PC-3 (cell line): ENCODE measurements at regions of chr2 and their contacts with region 1.

Region 1: GRCh38 chr2:121974897-121975661 is 219.6 kb downstream of the TSN start:
- DNase-seq: peak; percentile 91
- ATAC-seq: peak; percentile 98
- H3K4me3 ChIP-seq: peak overlapping the region; percentile 48; the same call in 1 of the 2 replicates
- H3K27ac ChIP-seq: no peak overlapping the region
- H3K4me1 ChIP-seq: no peaks in the 10 kb centered on the region; the same call in 1 of the 2 replicates
- H3K27me3 ChIP-seq: peaks cover 17% of the 10 kb centered on the region; the same call in 1 of the 2 replicates
- CTCF ChIP-seq: peak; percentile 79

Region 2: GRCh38 chr2:121810959-121811853 is 163.9 kb before region 1 on chr2:
- CTCF ChIA-PET with region 1: interaction called, 3 read pairs
- POLR2A ChIA-PET with region 1: no interaction called
- intact Hi-C with region 1: loop called (anchors 5 kb)
- DNase-seq: peak; percentile 79
- ATAC-seq: peak; percentile 97
- H3K4me3 ChIP-seq: no peak overlapping the region
- H3K27ac ChIP-seq: no peak overlapping the region
- H3K4me1 ChIP-seq: no peaks in the 10 kb centered on the region
- H3K27me3 ChIP-seq: 0 out of 2 replicates have a peak, but pooled peaks cover 4% of the 10 kb centered on the region
- CTCF ChIP-seq: peak; percentile 78

Region 3: DNA sequence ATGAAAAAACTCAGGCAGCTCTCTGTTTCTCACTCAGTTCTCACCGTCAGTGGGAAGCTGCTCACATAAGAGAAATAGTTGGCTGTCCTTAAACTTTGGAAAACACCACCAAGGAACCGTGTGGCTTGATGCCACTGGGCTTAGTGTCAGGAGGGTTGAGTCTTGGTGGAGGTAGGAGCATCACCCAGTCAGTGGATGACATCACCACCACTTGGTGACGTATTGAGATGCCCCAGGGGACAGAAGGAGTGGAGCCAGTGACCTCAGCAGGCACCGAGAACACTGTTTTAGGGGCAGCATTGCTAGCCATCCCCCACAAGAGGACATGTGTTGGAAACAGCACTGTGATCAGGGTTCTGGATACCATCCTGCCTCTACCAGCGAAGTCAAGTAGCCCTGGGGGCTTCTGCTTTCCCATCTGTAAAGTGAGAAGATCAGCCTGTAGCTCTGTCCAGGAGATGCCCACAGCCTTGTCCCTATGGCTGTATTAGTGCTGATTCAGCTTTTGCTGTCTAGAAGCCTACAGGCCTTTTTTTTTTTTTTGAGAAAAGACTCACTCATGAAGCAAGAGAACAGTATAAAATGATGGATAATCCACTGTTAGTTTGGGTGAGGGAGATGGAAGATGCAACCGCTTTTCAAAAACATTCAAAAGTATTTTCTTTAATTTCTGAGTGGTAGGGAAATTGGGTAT is 153.5 kb before region 1 on chr2:
- CTCF ChIA-PET with region 1: no interaction called
- POLR2A ChIA-PET with region 1: no interaction called
- intact Hi-C with region 1: no loop called
- DNase-seq: no peak
- ATAC-seq: no peak
- H3K4me3 ChIP-seq: no peak overlapping the region
- H3K27ac ChIP-seq: no peak overlapping the region
- H3K4me1 ChIP-seq: no peaks in the 10 kb centered on the region
- H3K27me3 ChIP-seq: peaks cover 38% of the 10 kb centered on the region
- CTCF ChIP-seq: no peak

Region 4: GRCh38 chr2:122156176-122156890 is 181.3 kb after region 1 on chr2:
- CTCF ChIA-PET with region 1: no interaction called
- POLR2A ChIA-PET with region 1: no interaction called
- intact Hi-C with region 1: no loop called
- DNase-seq: no peak
- ATAC-seq: no peak
- H3K4me3 ChIP-seq: no peak overlapping the region
- H3K27ac ChIP-seq: no peak overlapping the region
- H3K4me1 ChIP-seq: no peaks in the 10 kb centered on the region
- H3K27me3 ChIP-seq: peaks cover 76% of the 10 kb centered on the region
- CTCF ChIP-seq: no peak

Region 5: GRCh38 chr2:122191341-122191740 is 216.3 kb after region 1 on chr2:
- CTCF ChIA-PET with region 1: no interaction called
- POLR2A ChIA-PET with region 1: no interaction called
- intact Hi-C with region 1: loop called (anchors 10 kb)
- DNase-seq: peak; percentile 77
- ATAC-seq: peak; percentile 97
- H3K4me3 ChIP-seq: no peak overlapping the region
- H3K27ac ChIP-seq: no peak overlapping the region
- H3K4me1 ChIP-seq: peaks cover 10% of the 10 kb centered on the region; the same call in 1 of the 2 replicates
- H3K27me3 ChIP-seq: no peaks in the 10 kb centered on the region
- CTCF ChIP-seq: peak; percentile 85